ENCODE measurements at regions of chr17 and their contacts with region 1.

Region 1: GRCh38 chr17:42441371-42442195 is 17.1 kb upstream of the ATP6V0A1 start:
- DNase-seq: peak; percentile 89
- ATAC-seq: peak; percentile 92
- H3K4me3 ChIP-seq: peak overlapping the region in 2 of 3 experiments; percentile 32 to 48; a peak in 4 of 6 replicates
- H3K27ac ChIP-seq: peak overlapping the region; percentile 58
- H3K4me1 ChIP-seq: peaks cover 42% of the 10 kb centered on the region
- H3K27me3 ChIP-seq: no peaks in the 10 kb centered on the region
- CTCF ChIP-seq: no peak
- EP300 ChIP-seq: peak; percentile 26 to 65; a peak in 2 of 4 replicates
- POLR2A ChIP-seq: peak in 1 of 2 experiments; percentile 46; a peak in 1 of 4 replicates
- RAD21 ChIP-seq: no peak

Region 2: GRCh38 chr17:42484304-42484703 is 42.7 kb after region 1 on chr17:
- CTCF ChIA-PET with region 1: no interaction called
- POLR2A ChIA-PET with region 1: interaction called, 6 read pairs
- in situ Hi-C with region 1: no loop called
- intact Hi-C with region 1: loop called (anchors 1 kb)
- DNase-seq: peak; percentile 99
- ATAC-seq: peak; percentile 96
- H3K4me3 ChIP-seq: no peak overlapping the region
- H3K27ac ChIP-seq: peak overlapping the region; percentile 53
- H3K4me1 ChIP-seq: peaks cover 49% of the 10 kb centered on the region
- H3K27me3 ChIP-seq: no peaks in the 10 kb centered on the region
- CTCF ChIP-seq: no peak
- EP300 ChIP-seq: peak; percentile 6 to 88; a peak in 2 of 4 replicates
- POLR2A ChIP-seq: no peak
- RAD21 ChIP-seq: peak; percentile 29; the same call in 1 of the 2 replicates

Region 3: GRCh38 chr17:42548070-42548837 is 106.7 kb after region 1 on chr17:
- CTCF ChIA-PET with region 1: no interaction called
- POLR2A ChIA-PET with region 1: no interaction called
- in situ Hi-C with region 1: no loop called
- intact Hi-C with region 1: no loop called
- DNase-seq: no peak
- ATAC-seq: no peak
- H3K4me3 ChIP-seq: no peak overlapping the region
- H3K27ac ChIP-seq: no peak overlapping the region
- H3K4me1 ChIP-seq: peaks cover 65% of the 10 kb centered on the region
- H3K27me3 ChIP-seq: no peaks in the 10 kb centered on the region
- CTCF ChIP-seq: peak; percentile 33
- EP300 ChIP-seq: no peak
- POLR2A ChIP-seq: no peak; a peak in 1 of 4 replicates
- RAD21 ChIP-seq: no peak

Region 4: GRCh38 chr17:42609182-42609813 is 167.7 kb after region 1 on chr17 and contains the starts of genes RETREG3 and TUBG1:
- CTCF ChIA-PET with region 1: no interaction called
- POLR2A ChIA-PET with region 1: no interaction called
- in situ Hi-C with region 1: no loop called
- intact Hi-C with region 1: no loop called
- DNase-seq: peak; percentile 99
- ATAC-seq: peak; percentile 89
- H3K4me3 ChIP-seq: peak within 1 kb of the TSS; percentile 75 to 94 (median 91)
- H3K27ac ChIP-seq: peak within 1 kb of the TSS; percentile 89
- H3K4me1 ChIP-seq: peaks cover 59% of the 10 kb centered on the region
- H3K27me3 ChIP-seq: no peaks in the 10 kb centered on the region; a peak in 1 of 5 replicates
- CTCF ChIP-seq: peak; percentile 45
- EP300 ChIP-seq: no peak
- POLR2A ChIP-seq: peak; percentile 93 to 95
- RAD21 ChIP-seq: peak; percentile 81
- total RNA-seq, gene RETREG3: 38.2 and 55.8 TPM in 2 replicates
- total RNA-seq, gene TUBG1: 137 TPM in 2 replicates

Measured in HepG2 (cell line).